Caco-2 (cell line): ENCODE measurements at regions of chr10 and their contacts with region 1.

Region 1: DNA sequence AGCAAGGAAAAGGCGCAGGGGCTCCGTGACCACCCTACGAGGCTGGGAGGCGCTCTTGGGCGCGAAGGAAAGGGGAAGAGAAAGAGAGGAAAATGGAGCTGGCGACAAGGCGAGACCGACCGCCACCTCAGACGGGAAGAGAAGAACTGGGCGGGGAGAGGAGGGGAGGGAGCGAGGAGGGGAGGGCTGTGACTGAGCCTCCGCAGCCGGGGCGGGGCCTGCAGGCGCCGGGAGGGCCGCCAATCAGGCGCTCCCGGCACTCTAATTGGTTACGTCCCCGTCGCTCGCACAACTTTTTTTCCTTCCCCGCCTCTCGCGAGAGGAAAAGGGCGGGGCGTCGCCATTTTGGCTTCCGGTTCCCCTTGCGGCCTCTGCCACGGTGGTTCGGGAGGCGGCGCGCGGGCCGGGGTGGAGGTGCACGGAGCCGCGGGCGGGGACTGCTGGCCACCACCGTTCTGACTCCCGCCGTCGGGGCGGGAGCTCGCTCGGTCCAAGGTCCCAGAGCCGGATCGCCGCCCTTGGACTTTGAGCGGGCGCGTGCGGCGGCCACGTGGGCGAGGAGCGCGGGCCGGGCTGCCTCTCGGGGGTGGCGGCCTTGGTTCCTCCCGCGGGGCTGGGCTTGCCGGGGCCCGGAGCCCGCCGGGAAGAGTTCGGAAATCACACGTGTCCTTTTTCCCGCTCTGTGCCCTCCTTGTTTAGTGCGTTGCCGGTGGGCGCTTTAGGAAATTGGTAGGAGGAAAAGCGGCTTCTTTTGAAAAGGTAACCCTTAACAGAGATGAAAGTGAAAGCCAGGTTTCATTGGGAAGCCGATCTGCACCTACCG is at the start of gene GDI2:
- DNase-seq: peak; percentile 99 to 100
- H3K4me3 ChIP-seq: peak within 1 kb of the TSS; percentile 90
- H3K4me3 Mint-ChIP-seq: peak within 1 kb of the TSS; percentile 91
- H3K27ac Mint-ChIP-seq: peak within 1 kb of the TSS; percentile 87
- H3K4me1 ChIP-seq: peaks cover 35% of the 10 kb centered on the region
- H3K4me1 Mint-ChIP-seq: peaks cover 28% of the 10 kb centered on the region
- H3K27me3 ChIP-seq: no peaks in the 10 kb centered on the region
- H3K27me3 Mint-ChIP-seq: no peaks in the 10 kb centered on the region
- CTCF ChIP-seq: no peak
- total RNA-seq, gene GDI2: 436 and 446 TPM in 2 replicates

Region 2: DNA sequence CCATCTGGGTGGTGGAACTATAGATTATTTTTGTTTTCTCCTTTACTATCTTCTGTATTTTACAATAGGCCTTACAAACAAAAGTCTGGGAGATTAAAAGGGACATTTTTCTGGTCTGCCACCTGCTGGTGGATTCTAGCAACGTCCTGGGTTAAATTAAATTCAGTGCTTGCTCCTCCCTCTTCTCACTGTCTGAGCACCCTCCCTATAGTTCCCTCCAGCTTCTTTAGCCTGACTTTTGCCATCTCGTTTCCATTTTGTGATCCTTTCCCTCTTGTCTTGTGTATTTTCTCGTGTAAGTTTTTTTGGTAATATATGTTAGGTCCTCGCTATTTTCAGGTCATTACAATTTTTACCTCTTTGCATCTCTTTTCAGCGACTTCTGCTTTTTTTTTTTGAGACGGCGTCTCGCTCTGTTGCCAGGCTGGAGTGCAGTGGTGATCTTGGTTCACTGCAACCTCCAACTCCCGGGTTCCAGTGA is 60.1 kb after region 1 on chr10:
- CTCF ChIA-PET with region 1: interaction called, 7 read pairs
- POLR2A ChIA-PET with region 1: interaction called, 5 read pairs
- intact Hi-C with region 1: loop called (anchors 1 kb)
- DNase-seq: peak; percentile 65 to 82
- H3K4me3 ChIP-seq: no peak overlapping the region
- H3K4me3 Mint-ChIP-seq: no peak overlapping the region
- H3K27ac Mint-ChIP-seq: no peak overlapping the region
- H3K4me1 ChIP-seq: no peaks in the 10 kb centered on the region
- H3K4me1 Mint-ChIP-seq: no peaks in the 10 kb centered on the region
- H3K27me3 ChIP-seq: no peaks in the 10 kb centered on the region
- H3K27me3 Mint-ChIP-seq: no peaks in the 10 kb centered on the region
- CTCF ChIP-seq: peak; percentile 65 to 79

Region 3: DNA sequence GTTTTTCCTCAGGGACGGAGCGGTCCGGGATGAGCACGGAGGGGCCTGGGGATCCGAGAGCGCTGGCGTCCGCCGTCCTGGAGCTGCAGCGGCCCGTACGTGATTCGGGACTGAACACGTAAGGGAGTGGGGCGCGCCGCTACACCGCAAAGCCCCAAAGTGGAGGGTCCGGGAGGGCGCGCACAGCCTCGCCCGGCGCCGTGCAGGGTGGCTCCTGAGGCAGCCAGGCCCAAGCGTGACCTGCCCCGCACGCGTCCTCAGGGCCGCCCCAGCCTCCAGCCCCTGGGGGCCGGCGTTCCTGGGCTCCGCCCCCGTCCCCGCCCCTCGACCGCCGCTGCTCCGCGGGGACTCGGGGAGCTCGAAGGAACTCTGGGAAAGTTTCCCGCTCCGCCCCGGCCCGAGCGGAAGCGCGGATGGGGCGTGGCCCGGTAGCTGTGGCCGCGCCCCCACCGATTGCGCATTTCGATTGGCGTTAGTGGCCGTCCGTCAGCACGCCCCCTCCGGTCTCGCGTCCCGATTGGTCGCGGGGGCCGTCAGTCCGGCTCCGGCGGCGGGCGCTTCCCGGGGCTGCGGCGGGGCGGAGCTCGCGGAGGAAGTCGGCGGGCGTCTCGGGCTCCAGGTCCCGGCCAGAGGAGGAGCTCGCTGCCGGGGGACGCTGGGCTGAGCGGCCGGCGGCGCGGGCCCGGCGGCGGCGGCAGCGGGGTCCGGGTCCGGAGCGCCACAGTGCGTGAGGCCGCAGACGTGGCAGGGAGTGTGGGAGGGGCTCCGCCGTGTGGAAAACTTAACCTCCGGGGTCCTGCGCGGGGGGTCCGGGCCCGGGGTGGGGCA is 76.3 kb after region 1 on chr10 and contains the starts of genes ANKRD16 and FBH1:
- CTCF ChIA-PET with region 1: interaction called, 14 read pairs
- POLR2A ChIA-PET with region 1: interaction called, 109 read pairs
- intact Hi-C with region 1: loop called (anchors 1 kb)
- DNase-seq: peak; percentile 99 to 100
- H3K4me3 ChIP-seq: peak within 1 kb of the TSS; percentile 93
- H3K4me3 Mint-ChIP-seq: peak within 1 kb of the TSS; percentile 85
- H3K27ac Mint-ChIP-seq: peak within 1 kb of the TSS; percentile 83
- H3K4me1 ChIP-seq: peaks cover 7% of the 10 kb centered on the region; the same call in 1 of the 2 replicates
- H3K4me1 Mint-ChIP-seq: peaks cover 27% of the 10 kb centered on the region
- H3K27me3 ChIP-seq: no peaks in the 10 kb centered on the region
- H3K27me3 Mint-ChIP-seq: no peaks in the 10 kb centered on the region
- CTCF ChIP-seq: no peak
- total RNA-seq, gene ANKRD16: 17.4 and 20.2 TPM in 2 replicates
- total RNA-seq, gene FBH1: 83.3 and 96.1 TPM in 2 replicates